ENCODE measurements at regions of chr12 and their contacts with region 1.

Region 1: GRCh38 chr12:47949441-47950308 is 13.7 kb upstream of the TMEM106C start:
- DNase-seq: peak; percentile 87
- ATAC-seq: peak; percentile 90

Region 2: DNA sequence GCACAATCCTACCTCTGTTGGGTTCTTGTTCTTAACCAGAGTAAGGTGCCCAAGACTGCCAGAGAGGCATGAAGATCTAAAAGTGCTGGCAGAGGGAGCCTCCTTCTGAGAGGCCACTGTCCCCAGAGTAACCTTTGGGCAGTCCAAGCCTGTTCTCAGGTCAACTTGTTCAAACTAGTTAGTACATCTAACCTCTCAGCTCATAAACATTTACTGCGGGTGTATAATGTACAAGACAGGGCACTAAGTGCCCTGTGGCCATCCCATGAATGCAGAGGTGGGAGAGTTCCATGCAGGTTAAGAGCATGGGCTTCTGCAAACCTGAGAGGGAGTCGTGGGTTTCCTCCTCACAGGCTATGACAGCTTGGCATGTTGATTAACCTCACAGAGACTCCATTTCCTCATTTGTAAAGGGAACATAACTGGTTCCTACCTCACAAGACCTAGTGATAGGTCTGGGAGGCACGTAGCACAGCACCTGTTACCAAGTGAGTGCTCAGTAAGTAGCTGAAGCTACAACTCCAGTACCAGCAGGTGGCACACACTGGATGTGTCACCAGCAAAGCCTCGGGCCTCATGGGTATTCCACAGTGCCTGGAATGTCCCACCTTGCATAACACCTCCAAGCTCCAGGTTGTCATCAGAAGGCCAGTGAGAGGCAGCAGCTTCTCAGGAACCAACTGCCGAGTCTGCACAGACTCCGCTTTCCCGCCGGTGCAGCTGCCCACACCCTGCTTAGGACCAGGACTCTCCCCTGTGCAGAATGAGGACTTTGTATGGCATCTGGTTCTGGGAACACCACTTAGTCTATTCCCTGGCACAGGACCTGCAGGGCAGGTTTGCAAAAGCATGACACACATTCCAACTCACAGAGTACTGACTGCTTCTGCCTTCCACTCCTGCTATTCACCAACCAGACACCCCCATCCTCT is 49.3 kb before region 1 on chr12:
- intact Hi-C with region 1: loop called (anchors 1 kb)
- DNase-seq: no peak
- ATAC-seq: no peak

Region 3: DNA sequence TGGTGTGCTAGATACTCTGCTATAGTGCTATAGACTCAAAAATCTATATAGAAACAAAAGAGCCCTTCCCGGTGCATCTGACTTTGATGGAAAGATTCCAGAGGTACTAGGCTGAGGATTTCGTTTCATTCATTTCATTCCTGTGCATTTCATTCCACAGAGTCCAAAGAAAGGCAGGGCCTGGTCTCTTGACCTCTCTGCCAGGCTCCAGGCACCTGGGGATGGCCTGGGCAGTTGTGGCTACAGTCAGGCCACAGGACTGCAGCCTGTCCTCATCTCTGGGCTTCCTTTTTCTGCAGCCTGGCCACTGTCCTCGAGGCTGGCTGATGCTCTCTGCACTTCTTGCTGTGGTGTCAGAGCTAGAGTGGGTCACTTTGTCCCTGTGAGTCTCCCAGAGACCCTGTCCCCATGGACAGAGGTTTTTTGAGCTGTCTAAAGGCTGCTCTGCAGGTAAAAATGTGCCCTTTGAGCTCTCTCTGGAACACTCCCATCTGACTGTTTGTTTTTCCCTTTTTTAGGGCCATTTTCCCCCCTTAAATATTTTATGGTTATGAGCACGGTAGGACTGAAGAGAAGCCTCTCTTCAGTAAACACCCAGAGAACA is 41.7 kb before region 1 on chr12:
- intact Hi-C with region 1: loop called (anchors 2 kb)
- DNase-seq: no peak
- ATAC-seq: no peak

Region 4: DNA sequence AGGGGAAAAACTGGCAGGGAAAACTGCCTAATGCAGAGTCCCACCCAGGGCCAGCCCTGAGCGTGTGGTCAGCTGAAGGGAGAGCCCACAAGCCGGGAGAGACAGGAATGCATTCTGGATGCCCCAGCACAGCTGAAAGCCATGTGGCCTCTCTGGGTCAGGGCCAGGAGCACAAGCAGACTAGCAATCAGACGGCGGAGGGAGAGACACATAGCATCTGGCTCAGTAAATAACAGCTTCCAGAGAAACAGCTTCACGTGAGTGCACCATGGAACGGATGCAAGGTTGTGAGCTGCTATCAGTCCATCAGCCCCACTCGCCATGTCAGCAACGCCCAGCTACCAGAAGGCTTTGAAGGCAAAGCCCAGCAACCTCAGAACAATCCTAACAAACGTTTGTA is 14.5 kb before region 1 on chr12:
- intact Hi-C with region 1: no loop called
- DNase-seq: peak; percentile 78
- ATAC-seq: peak; percentile 82

Region 5: GRCh38 chr12:48061948-48062719 is 112.5 kb after region 1 on chr12:
- intact Hi-C with region 1: no loop called
- DNase-seq: no peak
- ATAC-seq: no peak